Activated CD8-positive, alpha-beta memory T cell treated with anti-CD3 and anti-CD28 coated beads, Interleukin-2, amount 10 ng/mL, durations not matched to agents 7 days and 5 days (primary cell): ENCODE measurements at regions of chr3 and their contacts with region 1.

Region 1: DNA sequence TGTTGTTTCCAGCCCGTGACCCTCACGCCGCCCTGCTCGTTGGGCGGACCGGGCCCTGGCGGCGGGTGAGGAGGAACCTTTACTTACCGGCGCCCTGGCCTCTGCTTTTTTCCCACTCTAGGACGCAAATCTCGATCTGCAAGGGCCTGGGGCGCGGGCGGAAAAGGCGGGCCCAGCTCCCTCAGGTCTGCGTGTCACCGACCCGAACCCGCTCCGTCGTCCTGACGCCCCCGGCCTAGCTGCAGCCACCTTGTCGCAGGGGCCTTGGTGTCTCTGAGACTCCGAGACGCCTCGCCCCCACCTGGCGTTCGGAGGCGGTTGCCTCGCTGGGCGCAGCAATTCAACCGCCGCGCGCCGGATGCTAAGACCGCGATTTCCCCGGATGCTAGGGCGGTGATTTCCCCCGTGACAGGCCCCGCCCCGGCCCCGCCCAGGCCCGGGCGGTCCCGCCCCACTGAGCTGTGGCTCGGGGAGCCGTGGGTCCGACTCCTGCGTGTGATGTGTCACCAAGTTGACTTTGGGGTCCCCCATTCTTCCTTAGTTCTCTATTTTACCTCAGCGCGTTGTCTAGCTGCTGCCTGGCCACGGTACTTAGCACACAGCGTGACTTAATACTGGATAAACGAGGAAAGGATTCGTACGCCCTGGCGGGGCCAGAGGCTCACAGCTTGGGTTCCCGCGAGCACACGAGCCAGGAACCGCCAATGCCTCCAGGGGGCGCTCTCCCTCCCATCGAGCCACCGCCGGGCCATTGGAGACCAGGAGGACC is at the start of gene RPL39L:
- DNase-seq: peak; percentile 97
- ATAC-seq: peak; percentile 97
- H3K4me3 Mint-ChIP-seq: peak within 1 kb of the TSS; percentile 90
- H3K27ac Mint-ChIP-seq: peak within 1 kb of the TSS; percentile 96
- H3K4me1 Mint-ChIP-seq: peaks cover 21% of the 10 kb centered on the region
- H3K27me3 Mint-ChIP-seq: no peaks in the 10 kb centered on the region
- total RNA-seq, gene RPL39L: 17.8 to 25.0 TPM

Region 2: DNA sequence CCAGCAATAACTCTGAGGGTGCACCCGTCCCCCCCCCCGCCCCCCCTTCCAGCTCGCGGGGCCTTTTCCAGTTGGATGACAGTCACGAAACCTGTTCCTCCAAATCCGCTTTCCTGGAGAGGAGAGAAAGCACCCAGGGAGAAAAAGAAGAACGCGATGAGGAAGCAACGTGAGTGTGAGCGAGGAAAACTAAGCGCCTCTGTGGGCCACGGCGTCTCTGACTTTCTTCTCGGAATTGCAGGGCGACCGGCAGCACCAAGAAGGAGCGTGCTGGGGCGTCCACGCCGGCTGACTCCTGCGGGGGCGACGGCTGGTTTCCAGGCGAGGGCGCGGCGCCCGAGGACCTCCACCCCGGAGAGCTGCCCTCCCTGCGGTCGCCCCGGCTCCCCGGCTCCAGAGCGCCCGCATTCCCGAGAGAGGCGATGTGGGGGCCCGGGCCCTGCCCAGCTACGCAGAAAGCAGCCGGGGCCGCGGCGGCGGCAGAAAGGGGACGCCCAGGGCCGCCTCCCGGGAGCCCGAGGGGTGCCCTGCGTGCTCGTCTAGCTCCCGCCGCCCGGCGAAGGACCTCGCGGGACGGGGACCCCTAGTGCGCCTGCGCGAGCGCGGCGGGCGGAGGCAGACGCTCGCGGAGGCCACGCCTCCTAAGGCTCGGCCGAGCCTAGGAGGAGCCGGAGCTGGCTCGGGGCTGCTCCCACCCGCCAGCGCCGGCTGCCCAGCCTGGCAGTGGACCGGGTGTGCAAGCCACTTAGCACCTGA is 312.2 kb before region 1 on chr3:
- CTCF ChIA-PET with region 1: interaction called, 10 read pairs
- DNase-seq: peak; percentile 89
- ATAC-seq: peak; percentile 96
- H3K4me3 Mint-ChIP-seq: peak overlapping the region; percentile 72
- H3K27ac Mint-ChIP-seq: peak overlapping the region; percentile 54
- H3K4me1 Mint-ChIP-seq: peaks cover 28% of the 10 kb centered on the region
- H3K27me3 Mint-ChIP-seq: peaks cover 43% of the 10 kb centered on the region

Region 3: DNA sequence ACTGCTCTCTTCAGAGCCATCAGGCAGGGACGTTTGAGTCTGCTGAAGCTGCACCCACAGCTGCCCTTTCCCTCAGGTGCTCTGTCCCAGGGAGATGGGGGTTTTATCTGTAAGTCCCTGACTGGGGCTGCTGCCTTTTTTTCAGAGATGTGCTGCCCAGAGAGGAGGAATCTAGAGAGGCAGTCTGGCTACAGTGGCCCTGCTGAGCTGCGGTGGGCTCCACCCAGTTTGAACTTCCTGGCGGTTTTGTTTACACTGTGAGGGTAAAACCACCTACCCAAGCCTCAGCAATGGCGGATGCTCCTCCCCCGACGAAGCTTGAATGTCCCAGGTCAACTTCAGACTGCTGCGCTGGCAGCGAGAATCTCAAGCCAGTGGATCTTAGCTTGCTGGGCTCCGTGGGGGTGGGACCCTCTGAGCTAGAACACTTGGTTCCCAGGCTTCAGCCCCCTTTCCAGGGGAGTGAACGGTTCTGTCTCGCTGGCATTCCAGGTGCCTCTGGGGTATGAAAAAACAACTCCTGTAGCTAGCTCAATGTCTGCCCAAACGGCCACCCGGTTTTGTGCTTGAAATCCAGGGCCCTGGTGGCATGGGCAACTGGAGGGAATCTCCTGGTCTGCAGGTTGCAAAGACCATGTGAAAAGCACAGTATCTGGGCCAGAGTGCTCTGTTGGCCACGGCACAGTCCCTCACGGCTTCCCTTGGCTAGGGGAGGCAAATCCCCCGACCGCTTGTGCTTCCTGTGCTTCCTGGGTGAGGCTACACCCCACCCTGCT is 230.0 kb before region 1 on chr3:
- CTCF ChIA-PET with region 1: interaction called, 10 read pairs
- DNase-seq: peak; percentile 95
- ATAC-seq: peak; percentile 92
- H3K4me3 Mint-ChIP-seq: peak overlapping the region; percentile 59
- H3K27ac Mint-ChIP-seq: peak overlapping the region; percentile 97
- H3K4me1 Mint-ChIP-seq: peaks cover 43% of the 10 kb centered on the region
- H3K27me3 Mint-ChIP-seq: no peaks in the 10 kb centered on the region

Region 4: GRCh38 chr3:186925826-186926225 is 213.5 kb before region 1 on chr3:
- CTCF ChIA-PET with region 1: no interaction called
- DNase-seq: no peak
- ATAC-seq: no peak
- H3K4me3 Mint-ChIP-seq: no peak overlapping the region
- H3K27ac Mint-ChIP-seq: no peak overlapping the region
- H3K4me1 Mint-ChIP-seq: peaks cover 7% of the 10 kb centered on the region
- H3K27me3 Mint-ChIP-seq: no peaks in the 10 kb centered on the region

Region 5: DNA sequence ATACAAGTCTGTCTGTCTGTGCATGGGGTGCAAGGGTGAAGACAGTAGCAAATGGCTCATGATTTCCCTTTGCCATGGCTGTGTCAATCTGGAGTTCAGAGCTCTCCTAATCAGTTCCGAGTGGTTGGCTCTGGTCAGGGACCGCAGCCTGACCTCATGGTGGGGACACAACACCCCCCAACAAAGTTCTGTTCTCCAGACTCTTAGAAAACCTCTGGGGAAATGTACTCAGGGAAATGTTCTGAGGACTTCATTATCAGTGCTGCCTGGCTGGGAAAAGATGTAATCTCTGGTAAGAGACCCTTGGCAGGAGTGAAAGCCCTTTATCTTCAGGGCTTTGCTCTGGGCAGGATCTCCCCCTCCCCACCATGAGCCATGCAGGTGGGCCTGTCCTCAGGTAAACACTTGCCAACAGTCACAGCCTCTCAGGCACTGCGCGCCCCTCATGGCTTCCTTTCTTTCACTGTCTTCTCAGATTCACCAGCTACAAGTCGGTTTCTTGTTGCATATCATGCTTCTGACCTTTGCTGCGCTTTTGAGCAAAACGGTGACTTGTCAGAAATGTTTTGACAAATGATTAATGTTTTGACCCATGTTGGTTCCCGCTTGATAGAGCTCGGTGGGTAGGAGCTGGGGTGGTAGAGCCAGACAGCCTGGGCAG is 113.5 kb before region 1 on chr3:
- CTCF ChIA-PET with region 1: interaction called, 16 read pairs
- DNase-seq: peak; percentile 61
- ATAC-seq: peak; percentile 52
- H3K4me3 Mint-ChIP-seq: peak overlapping the region; percentile 71
- H3K27ac Mint-ChIP-seq: peak overlapping the region; percentile 95
- H3K4me1 Mint-ChIP-seq: peaks cover 57% of the 10 kb centered on the region
- H3K27me3 Mint-ChIP-seq: no peaks in the 10 kb centered on the region

Region 6: GRCh38 chr3:187112934-187113793 is 26.1 kb before region 1 on chr3:
- CTCF ChIA-PET with region 1: interaction called, 73 read pairs
- DNase-seq: no peak
- ATAC-seq: peak; percentile 45
- H3K4me3 Mint-ChIP-seq: no peak overlapping the region
- H3K27ac Mint-ChIP-seq: no peak overlapping the region
- H3K4me1 Mint-ChIP-seq: peaks cover 7% of the 10 kb centered on the region
- H3K27me3 Mint-ChIP-seq: no peaks in the 10 kb centered on the region

Region 7: DNA sequence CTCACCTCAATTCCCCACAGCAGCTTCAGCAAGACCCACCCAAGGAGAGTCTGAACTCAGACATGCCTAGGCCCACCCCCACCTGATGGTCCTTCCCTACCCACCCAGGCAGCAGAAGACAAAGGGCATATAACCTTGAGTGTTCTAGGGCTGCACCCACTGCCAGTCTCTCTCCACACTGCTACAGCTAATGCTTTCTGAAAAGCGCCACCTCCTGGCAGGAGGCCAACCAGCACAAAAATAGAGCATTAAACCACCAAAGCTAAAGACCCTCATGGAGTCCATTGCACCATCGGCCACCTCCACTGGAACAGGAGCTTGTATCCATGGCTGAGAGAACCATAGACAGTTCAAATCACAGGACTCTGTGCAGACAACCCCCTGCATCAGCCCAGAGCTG is 11.3 kb after region 1 on chr3:
- CTCF ChIA-PET with region 1: interaction called, 78 read pairs
- DNase-seq: peak; percentile 75
- ATAC-seq: peak; percentile 63
- H3K4me3 Mint-ChIP-seq: no peak overlapping the region
- H3K27ac Mint-ChIP-seq: no peak overlapping the region
- H3K4me1 Mint-ChIP-seq: no peaks in the 10 kb centered on the region
- H3K27me3 Mint-ChIP-seq: peaks cover 44% of the 10 kb centered on the region